Activated CD4-positive, alpha-beta T cell treated with anti-CD3 and anti-CD28 coated beads for 36 hours (primary cell): ENCODE measurements at regions of chr4 and their contacts with region 1.

Region 1: GRCh38 chr4:43456383-43456782 is 563.9 kb downstream of the GRXCR1 start:
- DNase-seq: no peak
- ATAC-seq: no peak
- H3K4me3 Mint-ChIP-seq: no peak overlapping the region
- H3K27ac Mint-ChIP-seq: no peak overlapping the region
- H3K4me1 Mint-ChIP-seq: no peaks in the 10 kb centered on the region
- H3K27me3 Mint-ChIP-seq: no peaks in the 10 kb centered on the region

Region 2: GRCh38 chr4:43132010-43132582 is 324.3 kb before region 1 on chr4:
- CTCF ChIA-PET with region 1: no interaction called
- POLR2A ChIA-PET with region 1: no interaction called
- intact Hi-C with region 1: loop called in 1 of 2 experiments (anchors 10 kb)
- DNase-seq: peak; percentile 77
- ATAC-seq: no peak
- H3K4me3 Mint-ChIP-seq: no peak overlapping the region
- H3K27ac Mint-ChIP-seq: no peak overlapping the region
- H3K4me1 Mint-ChIP-seq: no peaks in the 10 kb centered on the region
- H3K27me3 Mint-ChIP-seq: no peaks in the 10 kb centered on the region

Region 3: DNA sequence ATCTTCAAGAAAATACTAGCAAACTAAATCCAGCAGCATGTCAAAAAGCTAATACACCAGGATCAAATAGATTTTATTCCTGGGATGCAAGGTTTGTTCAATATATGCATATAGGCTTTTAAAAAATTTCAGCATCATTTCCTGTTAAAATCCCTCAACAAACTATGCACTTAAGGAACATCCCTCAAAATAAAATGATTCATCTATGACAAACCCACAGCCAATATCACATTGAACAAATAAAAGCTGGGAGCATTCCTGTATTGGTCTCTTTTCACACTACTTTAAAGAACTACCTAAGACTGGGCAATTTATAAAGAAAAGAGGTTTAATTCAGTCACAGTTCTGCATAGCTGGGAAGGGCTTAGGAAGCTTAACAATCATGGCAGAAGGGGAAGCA is 162.8 kb after region 1 on chr4:
- CTCF ChIA-PET with region 1: no interaction called
- POLR2A ChIA-PET with region 1: no interaction called
- intact Hi-C with region 1: no loop called
- DNase-seq: no peak
- ATAC-seq: no peak
- H3K4me3 Mint-ChIP-seq: no peak overlapping the region
- H3K27ac Mint-ChIP-seq: no peak overlapping the region
- H3K4me1 Mint-ChIP-seq: no peaks in the 10 kb centered on the region
- H3K27me3 Mint-ChIP-seq: no peaks in the 10 kb centered on the region

Region 4: DNA sequence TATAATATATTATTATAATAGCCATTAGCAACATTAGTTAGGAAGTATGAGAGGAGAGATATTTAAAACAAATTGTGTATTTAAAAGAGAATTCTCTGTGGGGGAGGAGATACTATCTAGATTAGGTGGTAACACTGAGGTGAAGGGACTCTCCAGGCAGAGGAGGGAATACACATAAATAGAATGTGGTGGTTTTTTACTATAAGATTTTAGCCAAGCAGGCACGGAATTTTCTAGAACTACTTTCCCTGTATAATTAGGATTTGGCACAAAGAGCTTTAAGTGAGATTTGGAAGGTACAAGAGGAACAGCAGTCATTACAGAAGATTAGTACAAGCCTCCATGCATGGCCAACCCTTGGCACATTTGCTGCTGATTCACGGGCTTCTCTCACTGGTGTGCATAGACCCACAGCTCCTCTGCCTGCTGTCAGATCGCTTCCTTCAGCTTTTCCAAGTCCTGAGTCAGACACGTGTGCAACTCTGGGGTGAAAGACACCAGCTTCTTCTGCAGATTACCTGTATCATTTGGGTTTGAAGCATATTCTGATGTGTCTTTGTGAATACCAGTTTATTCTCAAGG is 306.7 kb after region 1 on chr4:
- CTCF ChIA-PET with region 1: no interaction called
- POLR2A ChIA-PET with region 1: no interaction called
- intact Hi-C with region 1: no loop called
- DNase-seq: no peak
- ATAC-seq: no peak
- H3K4me3 Mint-ChIP-seq: no peak overlapping the region
- H3K27ac Mint-ChIP-seq: no peak overlapping the region
- H3K4me1 Mint-ChIP-seq: no peaks in the 10 kb centered on the region
- H3K27me3 Mint-ChIP-seq: no peaks in the 10 kb centered on the region